Kidney (tissue), 22 donors: ENCODE measurements at regions of chr3 and their contacts with region 1.

Region 1: GRCh38 chr3:124351430-124352148 is 359.7 kb upstream of the ROPN1 start:
- DNase-seq: peak in 3 of 5 donors; percentile 64 to 94 (median 84)
- H3K4me3 ChIP-seq: no peak overlapping the region
- H3K27ac ChIP-seq: no peak overlapping the region
- H3K4me1 ChIP-seq: no peaks in the 10 kb centered on the region
- H3K27me3 ChIP-seq: no peaks in the 10 kb centered on the region
- CTCF ChIP-seq: peak; percentile 51

Region 2: DNA sequence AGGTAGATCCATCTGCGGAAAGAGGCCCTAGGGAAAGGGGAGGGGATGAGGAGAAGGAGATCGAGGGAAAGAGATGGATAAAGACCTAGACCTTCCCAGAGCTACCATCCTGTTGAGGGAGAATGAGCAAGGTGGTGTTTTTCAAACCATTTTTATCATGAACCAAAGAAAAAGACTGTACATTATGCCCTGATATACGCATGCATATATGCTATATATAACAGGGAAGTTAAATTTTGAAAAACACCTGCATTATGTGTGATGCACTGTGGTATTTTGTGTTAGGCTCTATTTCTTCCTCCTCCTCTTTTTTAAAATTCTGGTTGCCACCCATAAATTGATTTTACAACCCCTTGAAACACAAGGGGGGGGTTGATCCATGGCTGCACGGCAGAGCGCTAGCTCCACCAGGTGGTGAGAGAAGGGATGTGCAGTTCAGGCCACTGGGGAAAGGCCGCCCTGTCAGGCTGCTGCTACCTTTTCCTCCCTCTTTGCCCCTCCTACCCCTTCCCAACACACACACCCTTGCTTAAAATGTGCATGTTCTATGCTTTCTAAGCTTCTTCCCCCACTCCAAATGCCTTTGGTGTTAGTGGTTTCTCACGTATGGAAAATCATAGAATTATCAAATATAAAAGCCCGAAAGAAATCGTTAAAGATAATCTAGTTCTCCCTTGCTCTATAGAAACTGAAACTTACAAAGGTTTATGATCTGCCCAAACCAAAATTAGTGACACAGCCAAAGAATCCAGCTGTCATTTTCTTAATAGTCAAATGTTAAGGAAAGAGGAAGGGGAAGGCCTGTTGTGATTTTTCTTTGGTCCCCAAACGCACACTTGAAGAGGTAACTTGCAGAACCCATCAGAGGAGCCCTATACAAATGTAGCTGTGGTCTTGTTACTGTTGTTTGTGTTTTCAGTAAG is 116.7 kb after region 1 on chr3:
- intact Hi-C with region 1: loop called (anchors 10 kb)
- DNase-seq: peak; percentile 64 to 82 (median 70)
- H3K4me3 ChIP-seq: no peak overlapping the region
- H3K27ac ChIP-seq: no peak overlapping the region
- H3K4me1 ChIP-seq: no peaks in the 10 kb centered on the region
- H3K27me3 ChIP-seq: no peaks in the 10 kb centered on the region
- CTCF ChIP-seq: peak; percentile 86

Region 3: GRCh38 chr3:124492811-124493210 is 141.2 kb after region 1 on chr3:
- intact Hi-C with region 1: no loop called
- DNase-seq: peak in 4 of 5 donors; percentile 16 to 80 (median 34)
- H3K4me3 ChIP-seq: no peak overlapping the region
- H3K27ac ChIP-seq: no peak overlapping the region
- H3K4me1 ChIP-seq: no peaks in the 10 kb centered on the region
- H3K27me3 ChIP-seq: no peaks in the 10 kb centered on the region
- CTCF ChIP-seq: peak; percentile 58

Region 4: DNA sequence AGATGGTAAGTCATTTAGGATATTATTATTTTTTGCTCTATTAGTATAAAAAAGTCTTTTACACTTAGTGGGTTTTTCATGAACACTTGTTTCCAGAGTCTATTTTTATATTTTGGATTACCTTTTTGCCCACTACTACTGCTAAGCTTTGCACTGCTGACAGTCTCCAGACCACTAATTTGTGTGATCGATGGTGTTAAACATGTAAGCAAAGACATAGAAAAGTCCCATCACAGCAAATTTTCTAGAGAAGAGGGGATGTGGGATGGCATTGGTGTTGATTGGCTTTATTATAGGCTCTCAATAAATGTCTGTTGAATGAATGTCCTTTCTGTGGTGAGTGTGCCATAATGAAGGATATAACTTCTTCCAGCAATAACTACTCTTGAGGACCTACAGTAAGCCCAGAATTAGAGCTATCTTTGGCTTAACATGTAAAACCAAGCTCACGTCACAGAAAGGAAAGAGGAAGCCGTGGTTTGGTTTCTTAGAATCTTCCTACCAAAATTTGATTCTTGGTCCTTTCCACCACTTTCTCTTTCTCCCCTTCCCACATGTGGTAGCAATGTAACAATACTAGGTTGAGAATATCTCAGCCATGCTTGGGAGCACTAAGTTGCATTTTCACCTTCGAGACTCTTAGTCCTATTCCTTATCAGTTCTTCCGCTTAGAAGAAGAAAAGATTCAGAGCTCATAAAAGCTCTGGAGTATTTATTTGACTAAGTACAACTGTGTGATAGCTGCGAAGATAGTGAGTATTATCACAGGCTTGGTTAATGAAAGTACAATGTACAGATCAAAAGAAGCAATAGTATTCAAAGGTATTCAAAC is 288.0 kb after region 1 on chr3:
- intact Hi-C with region 1: no loop called
- DNase-seq: no peak
- H3K4me3 ChIP-seq: no peak overlapping the region
- H3K27ac ChIP-seq: no peak overlapping the region
- H3K4me1 ChIP-seq: peaks cover 0 to 13% (median 8%) of the 10 kb centered on the region in 3 donors
- H3K27me3 ChIP-seq: no peaks in the 10 kb centered on the region
- CTCF ChIP-seq: no peak

Region 5: DNA sequence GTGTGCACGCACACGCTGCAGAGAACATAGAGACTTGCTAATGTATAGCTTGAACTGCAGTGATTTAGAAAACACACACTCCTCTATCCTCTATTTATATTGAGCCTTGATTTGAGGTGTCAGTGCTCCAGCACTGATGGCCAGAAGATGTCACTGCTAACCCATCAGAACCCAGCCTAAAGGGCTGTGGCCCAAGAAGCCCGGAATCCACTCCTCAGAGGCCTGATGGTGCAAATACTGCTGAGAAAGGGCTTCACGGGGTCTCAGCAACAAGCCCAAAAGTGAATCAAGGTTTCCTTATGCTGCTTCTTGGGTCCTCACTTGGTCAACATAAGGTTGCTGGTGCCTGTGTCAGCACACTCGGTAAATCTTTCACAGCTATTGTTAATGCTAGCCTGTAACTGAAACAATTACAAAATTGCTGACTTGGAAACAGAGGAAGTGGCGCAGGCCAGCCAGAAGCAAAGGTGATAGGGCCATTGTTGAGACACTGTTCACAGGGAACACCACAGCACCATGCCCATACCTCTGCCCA is 643.9 kb after region 1 on chr3:
- intact Hi-C with region 1: no loop called
- DNase-seq: peak in 4 of 5 donors; percentile 59 to 85 (median 76)
- H3K4me3 ChIP-seq: no peak overlapping the region
- H3K27ac ChIP-seq: peak overlapping the region; percentile 26 to 29
- H3K4me1 ChIP-seq: peaks cover 0 to 21% (median 15%) of the 10 kb centered on the region in 3 donors
- H3K27me3 ChIP-seq: no peaks in the 10 kb centered on the region
- CTCF ChIP-seq: peak; percentile 77